Activated naive CD4-positive, alpha-beta T cell treated with anti-CD3 and anti-CD28 coated beads for 36 hours (primary cell): ENCODE measurements at regions of chr1 and their contacts with region 1.

Region 1: DNA sequence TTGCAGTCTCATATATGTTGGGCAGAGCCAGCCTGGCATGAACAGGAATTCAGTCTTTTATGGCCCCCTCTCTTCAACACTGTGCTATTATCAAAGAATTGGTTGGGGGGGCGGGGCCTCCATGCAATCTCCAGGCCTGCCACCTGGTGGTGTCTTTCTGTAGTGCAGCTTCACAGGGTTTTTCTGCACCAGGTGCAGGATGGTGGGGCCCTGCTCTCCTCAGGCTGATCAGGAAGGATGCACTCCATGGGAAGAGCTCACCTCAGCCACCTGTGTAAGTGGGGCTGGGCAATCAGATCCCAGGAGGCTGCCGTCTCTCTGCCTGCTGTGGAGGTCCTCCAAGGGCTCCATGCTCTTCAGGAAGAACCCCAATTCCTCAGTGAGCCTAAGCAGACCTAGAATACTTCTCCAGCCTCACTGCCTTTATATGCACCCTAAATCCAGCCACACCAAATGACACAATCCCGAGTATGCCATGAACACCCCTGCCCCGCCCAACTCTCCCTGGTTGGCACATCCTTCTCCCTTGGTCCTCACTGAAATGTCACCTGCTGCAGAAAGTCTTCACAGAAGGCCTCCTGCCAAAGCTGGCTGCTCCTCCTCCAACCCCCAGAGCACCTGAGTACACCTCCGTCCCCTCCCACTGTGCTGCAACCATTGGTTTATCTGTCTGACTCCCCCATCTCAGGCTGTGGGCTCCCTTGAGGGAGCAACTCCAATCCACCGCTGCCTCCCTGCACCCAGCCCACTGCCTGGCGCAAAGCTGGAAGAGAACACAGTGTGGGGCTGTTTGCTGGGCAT is 16.5 kb downstream of the STK40 start:
- DNase-seq: peak; percentile 93
- H3K4me3 Mint-ChIP-seq: no peak overlapping the region
- H3K27ac Mint-ChIP-seq: peak overlapping the region; percentile 65
- H3K4me1 Mint-ChIP-seq: peaks cover 67% of the 10 kb centered on the region
- H3K27me3 Mint-ChIP-seq: no peaks in the 10 kb centered on the region

Region 2: DNA sequence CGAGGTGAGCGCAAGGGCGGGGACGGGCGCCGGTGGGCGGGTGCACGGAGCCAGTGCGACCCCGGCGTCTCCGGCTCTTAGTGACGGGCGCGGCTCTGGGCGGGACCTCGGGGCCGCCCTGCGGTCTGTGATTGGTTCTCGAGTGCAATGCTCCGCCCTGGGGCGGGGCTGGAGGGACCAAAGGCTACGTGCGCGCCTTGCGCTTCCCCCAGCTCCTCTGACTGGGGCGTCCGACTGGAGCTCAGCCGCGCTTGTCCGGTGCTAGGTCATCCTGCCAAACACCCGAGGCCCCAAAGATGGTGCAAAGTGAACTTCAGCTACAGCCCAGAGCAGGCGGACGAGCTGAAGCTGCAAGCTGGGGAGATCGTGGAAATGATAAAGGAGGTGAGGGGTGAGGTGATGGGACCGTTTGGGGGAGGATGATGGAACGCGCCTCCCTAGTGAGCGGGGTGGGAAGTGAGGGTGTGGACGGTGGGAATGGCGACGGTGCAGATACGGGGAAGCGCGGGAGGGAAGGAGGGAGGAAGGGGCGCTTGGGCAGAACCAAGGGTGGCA is 62.3 kb before region 1 on chr1:
- CTCF ChIA-PET with region 1: interaction called, 4 read pairs
- intact Hi-C with region 1: loop called (anchors 1 kb)
- DNase-seq: peak; percentile 89
- H3K4me3 Mint-ChIP-seq: peak overlapping the region; percentile 96
- H3K27ac Mint-ChIP-seq: no peak overlapping the region
- H3K4me1 Mint-ChIP-seq: peaks cover 48% of the 10 kb centered on the region
- H3K27me3 Mint-ChIP-seq: no peaks in the 10 kb centered on the region

Region 3: DNA sequence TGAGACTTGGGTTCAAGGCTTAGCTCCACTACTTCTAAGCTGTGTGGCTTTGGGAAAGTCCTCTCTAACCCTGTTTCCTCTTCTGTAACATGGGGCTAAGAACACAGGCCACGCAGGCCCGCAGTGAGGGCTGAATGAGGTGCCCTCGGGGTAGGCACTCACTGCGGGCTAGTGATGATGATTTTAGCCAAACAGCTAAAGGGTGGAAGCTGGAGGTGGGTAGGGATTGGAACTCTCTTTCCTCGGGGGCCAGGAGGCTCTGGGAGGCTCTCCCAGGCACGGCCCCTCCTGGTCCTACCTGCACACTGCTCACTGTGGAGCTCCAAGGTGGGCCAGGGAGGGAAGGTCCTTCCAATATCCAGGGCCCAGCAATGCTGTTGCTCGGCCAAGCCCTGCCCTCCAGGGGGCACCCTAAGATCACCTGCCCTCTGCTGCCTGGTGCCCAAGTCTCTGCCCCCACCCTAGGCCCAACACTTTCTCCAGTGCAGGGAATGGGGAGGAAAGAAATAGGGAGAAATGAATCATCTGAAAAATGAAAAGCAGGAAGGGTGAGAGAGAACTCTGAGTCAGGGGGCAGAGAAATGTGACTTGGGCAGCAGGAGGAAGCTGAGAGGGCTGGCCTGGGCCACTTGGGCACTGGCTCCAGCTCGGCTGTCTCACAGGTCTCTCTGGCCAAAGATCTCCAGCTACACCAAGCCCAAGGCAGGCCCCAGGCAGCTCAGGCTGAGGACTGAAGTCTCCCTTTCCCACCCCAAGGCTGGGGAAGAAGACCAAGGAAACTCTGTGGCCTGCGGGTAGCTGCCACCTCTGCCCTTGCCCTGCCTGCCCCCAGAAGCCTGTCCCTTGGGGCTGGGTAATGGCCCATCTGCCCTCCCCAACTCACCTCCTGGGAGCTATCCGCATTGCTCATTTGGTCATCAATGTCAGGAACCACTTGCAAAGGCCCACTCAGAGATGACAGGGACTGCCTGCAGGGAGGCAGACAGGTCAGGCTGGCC is 26.5 kb before region 1 on chr1:
- CTCF ChIA-PET with region 1: interaction called, 53 read pairs
- intact Hi-C with region 1: loop called (anchors 1 kb)
- DNase-seq: peak; percentile 70
- H3K4me3 Mint-ChIP-seq: no peak overlapping the region
- H3K27ac Mint-ChIP-seq: peak overlapping the region; percentile 66
- H3K4me1 Mint-ChIP-seq: peaks cover 18% of the 10 kb centered on the region
- H3K27me3 Mint-ChIP-seq: no peaks in the 10 kb centered on the region

Region 4: GRCh38 chr1:36397378-36398230 is 28.3 kb after region 1 on chr1 and contains the start of gene LSM10:
- CTCF ChIA-PET with region 1: interaction called, 13 read pairs
- intact Hi-C with region 1: no loop called
- DNase-seq: peak; percentile 95
- H3K4me3 Mint-ChIP-seq: peak within 1 kb of the TSS; percentile 96
- H3K27ac Mint-ChIP-seq: peak within 1 kb of the TSS; percentile 94
- H3K4me1 Mint-ChIP-seq: peaks cover 35% of the 10 kb centered on the region
- H3K27me3 Mint-ChIP-seq: no peaks in the 10 kb centered on the region
- total RNA-seq, gene LSM10: 33.5 to 36.5 TPM

Region 5: GRCh38 chr1:38221006-38221649 is 1851.9 kb after region 1 on chr1:
- CTCF ChIA-PET with region 1: no interaction called
- intact Hi-C with region 1: no loop called
- DNase-seq: no peak
- H3K4me3 Mint-ChIP-seq: no peak overlapping the region
- H3K27ac Mint-ChIP-seq: no peak overlapping the region
- H3K4me1 Mint-ChIP-seq: no peaks in the 10 kb centered on the region
- H3K27me3 Mint-ChIP-seq: peaks cover 11% of the 10 kb centered on the region